Vagina (tissue), 2 donors: ENCODE measurements at regions of chr1 and their contacts with region 1.

Region 1: DNA sequence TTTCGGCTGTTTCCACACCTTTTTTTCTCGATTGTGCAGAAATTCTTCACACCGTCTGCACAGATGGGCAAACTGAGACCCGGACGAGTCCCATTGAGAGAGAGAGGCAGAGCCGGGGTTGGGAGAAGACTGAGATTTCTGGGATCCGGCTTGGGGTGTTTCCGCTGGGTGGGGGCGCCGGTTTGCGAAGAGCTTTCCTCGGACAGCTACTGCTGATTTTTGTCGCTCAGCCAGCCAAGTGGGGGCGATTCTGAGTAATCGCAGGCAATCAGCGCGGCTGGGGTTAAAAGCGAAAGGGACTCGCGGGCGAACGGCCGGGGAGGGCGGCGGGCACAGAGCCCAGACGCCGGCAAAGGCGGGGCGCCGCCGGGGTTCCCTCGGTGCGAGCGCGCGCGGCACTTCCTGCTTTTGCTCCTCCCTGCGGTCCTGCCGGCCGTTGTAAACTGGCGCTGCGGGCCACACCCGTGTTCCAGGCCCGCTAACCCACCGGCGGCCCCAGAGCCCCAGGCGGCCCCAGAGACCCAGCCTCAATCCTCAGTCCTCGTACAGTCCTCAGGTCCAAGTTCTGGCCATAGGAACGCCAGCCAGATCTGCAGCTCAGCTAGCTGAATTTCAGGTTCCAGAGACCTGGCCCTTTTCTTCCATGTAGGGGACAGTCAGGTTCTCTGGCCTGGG is 32.4 kb upstream of the JUN start:
- DNase-seq: no peak
- H3K4me3 ChIP-seq: peak overlapping the region; percentile 57 to 68
- H3K27ac ChIP-seq: peak overlapping the region; percentile 88
- H3K4me1 ChIP-seq: peaks cover 54% of the 10 kb centered on the region
- H3K27me3 ChIP-seq: no peaks in the 10 kb centered on the region
- CTCF ChIP-seq: no peak
- POLR2A ChIP-seq: no peak

Region 2: DNA sequence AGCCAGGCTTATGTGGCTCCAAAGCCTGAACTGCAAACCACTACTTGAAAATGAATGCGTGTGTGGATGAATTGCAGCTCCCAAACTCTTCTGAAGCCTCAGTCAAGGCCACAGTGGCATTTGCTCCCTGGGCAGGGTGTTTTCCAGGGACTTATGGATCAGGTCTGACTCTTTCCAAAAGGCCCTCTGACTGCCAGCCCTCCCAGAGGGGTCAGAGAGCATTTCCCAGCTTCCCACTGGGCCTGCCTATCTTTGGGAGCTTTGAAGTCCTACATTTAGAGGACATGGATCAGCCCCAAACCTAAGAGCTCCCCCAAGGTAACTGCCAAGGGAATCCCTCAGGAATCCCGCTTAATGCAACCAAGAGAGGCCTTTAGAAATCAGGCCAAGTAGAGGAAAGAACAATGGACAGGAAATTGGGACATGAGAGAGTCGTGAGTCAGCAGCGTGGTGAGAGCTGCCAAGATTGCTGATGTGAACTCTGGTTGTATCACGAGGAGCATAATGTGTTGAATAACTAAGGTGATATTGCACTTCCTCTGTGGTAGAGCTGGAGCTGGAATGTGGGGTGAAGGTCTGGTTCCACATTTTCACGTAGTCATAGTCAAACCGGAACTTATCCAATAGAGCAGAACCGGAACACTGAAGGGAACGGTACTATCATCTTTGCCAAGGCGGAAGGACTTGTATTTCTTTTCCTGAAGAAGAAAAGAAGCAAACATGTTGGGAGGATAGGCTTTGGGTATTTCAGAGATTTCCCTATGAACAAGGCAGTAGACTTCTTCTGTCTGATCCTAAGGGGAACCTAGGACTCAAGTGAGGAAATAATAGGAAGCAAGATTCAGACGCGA is 67.1 kb after region 1 on chr1:
- intact Hi-C with region 1: loop called (anchors 10 kb)
- DNase-seq: no peak
- H3K4me3 ChIP-seq: no peak overlapping the region
- H3K27ac ChIP-seq: peak overlapping the region; percentile 74
- H3K4me1 ChIP-seq: peaks cover 66% of the 10 kb centered on the region
- H3K27me3 ChIP-seq: no peaks in the 10 kb centered on the region
- CTCF ChIP-seq: no peak
- POLR2A ChIP-seq: no peak

Region 3: GRCh38 chr1:58903514-58904298 is 87.5 kb after region 1 on chr1:
- intact Hi-C with region 1: loop called (anchors 2 kb)
- DNase-seq: no peak
- H3K4me3 ChIP-seq: peak overlapping the region; percentile 43 to 63
- H3K27ac ChIP-seq: peak overlapping the region; percentile 93
- H3K4me1 ChIP-seq: peaks cover 11% of the 10 kb centered on the region
- H3K27me3 ChIP-seq: no peaks in the 10 kb centered on the region
- CTCF ChIP-seq: no peak
- POLR2A ChIP-seq: peak in 1 of 2 donors; percentile 81